ENCODE measurements at regions of chr7 and their contacts with region 1.

Region 1: GRCh38 chr7:87886875-87887274 is 10.6 kb downstream of the DBF4 start:
- DNase-seq: no peak
- H3K4me3 Mint-ChIP-seq: no peak overlapping the region
- H3K27ac Mint-ChIP-seq: no peak overlapping the region
- H3K4me1 Mint-ChIP-seq: peaks cover 18% of the 10 kb centered on the region
- H3K27me3 Mint-ChIP-seq: no peaks in the 10 kb centered on the region
- CTCF ChIP-seq: no peak

Region 2: GRCh38 chr7:86158111-86158510 is 1728.8 kb before region 1 on chr7:
- CTCF ChIA-PET with region 1: interaction called, 10 read pairs
- intact Hi-C with region 1: no loop called
- DNase-seq: no peak
- H3K4me3 Mint-ChIP-seq: no peak overlapping the region
- H3K27ac Mint-ChIP-seq: no peak overlapping the region
- H3K4me1 Mint-ChIP-seq: no peaks in the 10 kb centered on the region
- H3K27me3 Mint-ChIP-seq: no peaks in the 10 kb centered on the region
- CTCF ChIP-seq: no peak

Region 3: DNA sequence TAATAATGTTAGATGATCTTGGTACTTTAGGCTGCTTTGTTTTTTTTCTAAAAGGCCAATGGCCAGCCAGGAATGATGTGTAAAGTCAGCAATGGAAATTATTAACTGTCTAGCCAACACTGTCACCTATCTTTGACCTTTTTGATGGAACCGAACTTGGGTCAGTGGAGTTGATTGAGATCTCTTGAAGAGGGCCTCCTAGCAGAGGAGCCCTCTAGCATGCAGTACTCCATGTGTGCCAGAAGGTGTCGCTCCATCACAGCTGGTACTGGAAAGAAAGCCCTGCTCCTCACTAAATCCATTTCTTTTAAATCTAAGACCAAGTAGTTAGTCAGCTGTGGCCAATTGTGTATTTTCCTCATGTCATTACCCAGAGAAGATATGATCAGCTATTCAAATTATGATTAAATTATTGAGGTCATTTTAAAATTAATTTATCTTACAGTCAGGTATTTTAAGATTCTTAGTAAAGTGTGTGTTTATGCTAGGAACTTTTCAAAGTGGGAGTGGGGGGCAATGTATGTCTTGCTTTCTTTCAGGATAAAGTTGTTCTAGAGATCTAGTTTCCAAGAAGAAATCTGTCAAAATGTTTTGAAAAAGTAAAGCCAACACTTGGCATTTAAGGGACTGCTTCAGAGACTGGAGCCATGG is 574.5 kb before region 1 on chr7:
- CTCF ChIA-PET with region 1: no interaction called
- intact Hi-C with region 1: loop called (anchors 5 kb)
- DNase-seq: peak; percentile 54
- H3K4me3 Mint-ChIP-seq: no peak overlapping the region
- H3K27ac Mint-ChIP-seq: no peak overlapping the region
- H3K4me1 Mint-ChIP-seq: peaks cover 6% of the 10 kb centered on the region
- H3K27me3 Mint-ChIP-seq: peaks cover 7% of the 10 kb centered on the region
- CTCF ChIP-seq: peak; percentile 38

Region 4: GRCh38 chr7:87506246-87507180 is 380.4 kb before region 1 on chr7:
- CTCF ChIA-PET with region 1: no interaction called
- intact Hi-C with region 1: loop called (anchors 1 kb)
- DNase-seq: no peak
- H3K4me3 Mint-ChIP-seq: no peak overlapping the region
- H3K27ac Mint-ChIP-seq: no peak overlapping the region
- H3K4me1 Mint-ChIP-seq: no peaks in the 10 kb centered on the region
- H3K27me3 Mint-ChIP-seq: no peaks in the 10 kb centered on the region
- CTCF ChIP-seq: peak; percentile 19

Region 5: DNA sequence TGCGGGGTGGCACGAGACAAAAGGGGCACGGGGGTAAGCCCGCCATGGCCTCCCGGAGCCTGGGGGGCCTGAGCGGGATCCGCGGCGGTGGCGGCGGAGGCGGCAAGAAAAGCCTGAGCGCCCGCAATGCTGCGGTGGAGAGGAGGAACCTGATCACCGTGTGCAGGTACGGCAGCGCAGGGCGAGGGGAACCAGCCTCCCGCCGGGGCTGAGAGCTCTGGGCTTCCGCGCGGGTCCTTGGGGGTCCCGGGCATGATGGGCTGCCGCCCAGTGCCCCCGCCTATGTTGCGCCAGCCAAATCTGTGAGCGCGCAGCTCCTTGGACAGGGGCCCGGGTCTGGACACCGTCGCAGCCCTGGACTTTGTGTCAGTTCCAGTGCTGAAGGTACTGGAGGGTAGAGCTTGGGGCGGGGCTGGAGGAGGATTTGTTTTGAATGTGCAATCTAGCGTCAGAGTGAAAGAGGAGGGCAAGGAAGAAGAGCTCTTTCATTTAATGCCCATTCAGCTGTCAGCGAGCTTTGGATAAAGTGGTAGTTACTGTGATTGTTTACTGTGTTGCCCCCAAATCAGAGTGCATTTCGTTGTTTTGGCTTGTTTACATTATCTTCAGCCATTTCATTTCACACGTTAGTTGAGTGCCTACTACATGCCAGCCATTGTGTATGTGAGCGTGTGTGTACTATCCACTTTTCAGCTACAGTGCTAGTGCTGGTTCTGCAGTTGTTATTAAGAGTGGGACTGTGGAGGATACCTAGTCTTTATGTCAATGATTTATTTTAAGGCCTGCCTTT is 257.9 kb before region 1 on chr7:
- CTCF ChIA-PET with region 1: no interaction called
- intact Hi-C with region 1: loop called (anchors 10 kb)
- DNase-seq: peak; percentile 32
- H3K4me3 Mint-ChIP-seq: peak overlapping the region; percentile 89
- H3K27ac Mint-ChIP-seq: no peak overlapping the region
- H3K4me1 Mint-ChIP-seq: no peaks in the 10 kb centered on the region
- H3K27me3 Mint-ChIP-seq: no peaks in the 10 kb centered on the region
- CTCF ChIP-seq: no peak

Region 6: GRCh38 chr7:87797798-87798403 is 89.0 kb before region 1 on chr7:
- CTCF ChIA-PET with region 1: no interaction called
- intact Hi-C with region 1: loop called (anchors 1 kb)
- DNase-seq: peak; percentile 14
- H3K4me3 Mint-ChIP-seq: no peak overlapping the region
- H3K27ac Mint-ChIP-seq: no peak overlapping the region
- H3K4me1 Mint-ChIP-seq: no peaks in the 10 kb centered on the region
- H3K27me3 Mint-ChIP-seq: no peaks in the 10 kb centered on the region
- CTCF ChIP-seq: no peak

Region 7: DNA sequence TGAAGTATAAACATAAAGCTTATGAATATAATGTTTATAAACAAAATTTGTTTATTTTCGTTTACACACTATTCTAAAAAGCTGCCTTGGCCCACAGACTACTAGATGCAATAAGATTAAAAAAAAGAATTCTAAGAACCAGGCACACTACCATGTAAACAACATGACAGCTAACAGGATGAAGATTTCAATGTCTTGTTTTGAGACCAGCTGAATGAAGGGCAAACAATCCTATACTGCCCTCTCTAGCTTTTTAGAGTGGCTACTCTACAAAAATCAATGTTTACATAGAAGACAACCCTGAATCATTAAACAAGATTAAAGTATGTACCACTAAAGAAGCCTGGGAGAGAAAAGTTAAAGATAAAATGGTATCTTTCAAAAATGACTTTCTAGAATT is 49.3 kb before region 1 on chr7:
- CTCF ChIA-PET with region 1: no interaction called
- intact Hi-C with region 1: loop called (anchors 5 kb)
- DNase-seq: no peak
- H3K4me3 Mint-ChIP-seq: no peak overlapping the region
- H3K27ac Mint-ChIP-seq: no peak overlapping the region
- H3K4me1 Mint-ChIP-seq: no peaks in the 10 kb centered on the region
- H3K27me3 Mint-ChIP-seq: no peaks in the 10 kb centered on the region
- CTCF ChIP-seq: no peak

Measured in Calu3 (cell line).